ENCODE measurements at regions of chr3 and their contacts with region 1.

Region 1: DNA sequence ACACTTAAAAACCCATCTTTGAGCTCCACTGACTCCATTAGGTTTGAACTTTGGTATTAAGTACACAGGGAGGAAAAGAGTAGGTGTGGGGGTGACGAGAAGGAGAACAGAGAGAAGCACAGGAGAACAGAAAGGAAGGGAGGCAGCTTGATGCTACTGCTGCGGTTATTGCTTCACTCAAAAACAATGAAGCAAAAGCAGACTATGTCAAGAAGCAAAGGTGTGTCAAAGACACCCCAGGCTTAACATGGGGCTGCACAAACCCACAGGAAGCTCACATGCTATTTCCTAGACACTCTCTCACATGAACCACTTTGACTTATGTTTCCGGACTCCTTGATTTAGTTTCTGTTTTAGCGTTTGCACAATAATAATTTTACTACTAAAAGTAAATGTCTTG is 961.0 kb upstream of the CFAP20DC start:
- DNase-seq: peak; percentile 23 to 93 (median 64)
- ATAC-seq: peak; percentile 96
- H3K4me3 ChIP-seq: peak overlapping the region; percentile 31 to 32
- H3K4me3 Mint-ChIP-seq: peak overlapping the region; percentile 85
- H3K27ac ChIP-seq: peak overlapping the region; percentile 66 to 86
- H3K27ac Mint-ChIP-seq: peak overlapping the region; percentile 99
- H3K4me1 ChIP-seq: peaks cover 85% of the 10 kb centered on the region
- H3K4me1 Mint-ChIP-seq: peaks cover 89% of the 10 kb centered on the region
- H3K27me3 ChIP-seq: no peaks in the 10 kb centered on the region
- H3K27me3 Mint-ChIP-seq: no peaks in the 10 kb centered on the region
- CTCF ChIP-seq: no peak

Region 2: DNA sequence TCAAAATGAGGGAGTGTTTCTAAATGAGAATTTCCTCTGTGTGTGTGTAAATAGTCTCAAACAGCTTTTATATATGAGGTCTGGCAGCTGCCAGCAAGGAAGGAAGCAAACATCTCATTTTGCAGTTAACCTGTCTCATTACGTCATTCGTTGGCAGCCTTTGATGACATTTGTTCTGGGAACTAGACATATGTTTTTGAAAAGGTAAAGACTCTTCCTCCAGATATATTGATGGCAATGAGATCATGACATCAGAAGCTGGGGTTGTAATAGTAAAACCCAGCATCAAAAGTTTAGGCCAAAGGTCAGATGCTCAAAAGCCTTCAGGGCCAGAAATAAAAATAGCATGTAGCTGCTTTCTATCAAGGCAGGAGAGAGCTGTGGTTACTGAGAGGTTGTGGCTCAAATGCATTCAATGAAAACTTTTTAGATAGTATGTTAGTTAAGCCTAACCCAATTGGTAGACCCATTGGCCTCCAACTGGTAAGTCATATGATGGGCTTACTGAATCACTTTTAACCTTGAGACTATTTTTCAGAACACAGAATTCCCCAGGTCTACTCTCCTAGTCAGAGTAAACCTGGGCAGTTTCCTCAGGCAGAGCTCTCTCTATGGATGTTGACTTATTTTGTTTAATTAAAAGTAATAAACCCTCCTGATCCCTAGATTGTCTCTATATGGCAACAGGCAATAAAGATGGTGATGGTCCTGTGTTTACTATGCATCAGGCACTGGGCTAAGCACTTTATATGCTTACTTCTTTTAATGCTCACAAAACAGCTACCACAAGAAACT is 574.4 kb before region 1 on chr3:
- CTCF ChIA-PET with region 1: no interaction called
- POLR2A ChIA-PET with region 1: no interaction called
- intact Hi-C with region 1: loop called in 1 of 2 experiments (anchors 10 kb)
- DNase-seq: peak in 4 of 9 experiments; percentile 27 to 58 (median 48)
- ATAC-seq: peak; percentile 85
- H3K4me3 ChIP-seq: no peak overlapping the region
- H3K4me3 Mint-ChIP-seq: peak overlapping the region; percentile 20
- H3K27ac ChIP-seq: no peak overlapping the region
- H3K27ac Mint-ChIP-seq: peak overlapping the region; percentile 89
- H3K4me1 ChIP-seq: peaks cover 11% of the 10 kb centered on the region
- H3K4me1 Mint-ChIP-seq: peaks cover 14% of the 10 kb centered on the region
- H3K27me3 ChIP-seq: no peaks in the 10 kb centered on the region
- H3K27me3 Mint-ChIP-seq: no peaks in the 10 kb centered on the region
- CTCF ChIP-seq: no peak

Region 3: DNA sequence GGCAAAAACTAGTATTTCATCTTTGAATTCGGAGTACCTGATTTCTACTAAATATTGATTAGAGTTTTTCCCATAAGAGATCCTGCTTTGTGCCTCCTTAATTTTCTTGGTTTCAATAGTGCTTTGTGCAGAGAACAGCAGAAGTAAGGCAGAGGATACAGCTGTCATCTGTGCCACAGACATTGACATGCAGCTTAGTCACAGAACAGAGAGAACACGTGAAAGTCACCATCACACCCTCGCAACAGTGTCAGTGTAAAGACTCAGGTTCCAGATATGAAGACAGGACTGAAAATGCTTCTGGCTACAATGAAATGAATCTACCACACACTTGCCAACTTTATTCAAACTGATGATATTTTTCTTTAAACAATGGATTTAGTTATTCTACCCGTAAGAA is 18.2 kb before region 1 on chr3:
- CTCF ChIA-PET with region 1: interaction called, 6 read pairs
- POLR2A ChIA-PET with region 1: interaction called, 12 read pairs
- intact Hi-C with region 1: loop called in 1 of 2 experiments (anchors 2 kb)
- DNase-seq: no peak
- ATAC-seq: no peak
- H3K4me3 ChIP-seq: no peak overlapping the region
- H3K4me3 Mint-ChIP-seq: no peak overlapping the region
- H3K27ac ChIP-seq: no peak overlapping the region
- H3K27ac Mint-ChIP-seq: no peak overlapping the region
- H3K4me1 ChIP-seq: peaks cover 54% of the 10 kb centered on the region
- H3K4me1 Mint-ChIP-seq: peaks cover 72% of the 10 kb centered on the region
- H3K27me3 ChIP-seq: no peaks in the 10 kb centered on the region
- H3K27me3 Mint-ChIP-seq: no peaks in the 10 kb centered on the region
- CTCF ChIP-seq: no peak

Region 4: GRCh38 chr3:60025096-60026050 is 14.6 kb after region 1 on chr3:
- CTCF ChIA-PET with region 1: interaction called, 5 read pairs
- POLR2A ChIA-PET with region 1: interaction called, 8 read pairs
- intact Hi-C with region 1: loop called in 1 of 2 experiments (anchors 2 kb)
- DNase-seq: no peak
- ATAC-seq: no peak
- H3K4me3 ChIP-seq: no peak overlapping the region
- H3K4me3 Mint-ChIP-seq: no peak overlapping the region
- H3K27ac ChIP-seq: no peak overlapping the region
- H3K27ac Mint-ChIP-seq: no peak overlapping the region
- H3K4me1 ChIP-seq: peaks cover 16% of the 10 kb centered on the region
- H3K4me1 Mint-ChIP-seq: peaks cover 36% of the 10 kb centered on the region
- H3K27me3 ChIP-seq: no peaks in the 10 kb centered on the region
- H3K27me3 Mint-ChIP-seq: no peaks in the 10 kb centered on the region
- CTCF ChIP-seq: no peak

Region 5: DNA sequence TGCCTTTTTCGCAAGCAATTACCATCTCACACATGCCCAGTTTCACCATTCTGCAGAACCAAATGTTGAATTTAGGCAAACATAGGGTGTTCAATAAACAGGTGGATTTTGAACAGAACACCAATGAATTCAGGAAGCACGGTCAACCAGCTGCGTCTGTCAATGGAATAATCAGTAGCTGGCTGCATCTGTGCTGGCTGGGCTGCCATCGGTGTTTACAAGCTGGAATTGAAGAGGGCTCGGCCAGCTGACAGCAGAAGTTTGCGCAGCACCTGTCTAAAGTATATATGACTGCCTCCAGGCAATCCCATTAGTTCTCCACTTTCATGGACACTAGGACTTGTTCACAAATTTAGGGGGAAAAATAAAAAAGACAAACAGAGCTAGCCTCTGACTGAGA is 35.4 kb after region 1 on chr3:
- CTCF ChIA-PET with region 1: interaction called, 3 read pairs
- POLR2A ChIA-PET with region 1: interaction called, 5 read pairs
- intact Hi-C with region 1: loop called (anchors 5 kb)
- DNase-seq: no peak
- ATAC-seq: no peak
- H3K4me3 ChIP-seq: no peak overlapping the region
- H3K4me3 Mint-ChIP-seq: no peak overlapping the region
- H3K27ac ChIP-seq: no peak overlapping the region
- H3K27ac Mint-ChIP-seq: peak overlapping the region; percentile 20
- H3K4me1 ChIP-seq: peaks cover 12% of the 10 kb centered on the region
- H3K4me1 Mint-ChIP-seq: peaks cover 29% of the 10 kb centered on the region
- H3K27me3 ChIP-seq: no peaks in the 10 kb centered on the region
- H3K27me3 Mint-ChIP-seq: no peaks in the 10 kb centered on the region
- CTCF ChIP-seq: no peak

Region 6: DNA sequence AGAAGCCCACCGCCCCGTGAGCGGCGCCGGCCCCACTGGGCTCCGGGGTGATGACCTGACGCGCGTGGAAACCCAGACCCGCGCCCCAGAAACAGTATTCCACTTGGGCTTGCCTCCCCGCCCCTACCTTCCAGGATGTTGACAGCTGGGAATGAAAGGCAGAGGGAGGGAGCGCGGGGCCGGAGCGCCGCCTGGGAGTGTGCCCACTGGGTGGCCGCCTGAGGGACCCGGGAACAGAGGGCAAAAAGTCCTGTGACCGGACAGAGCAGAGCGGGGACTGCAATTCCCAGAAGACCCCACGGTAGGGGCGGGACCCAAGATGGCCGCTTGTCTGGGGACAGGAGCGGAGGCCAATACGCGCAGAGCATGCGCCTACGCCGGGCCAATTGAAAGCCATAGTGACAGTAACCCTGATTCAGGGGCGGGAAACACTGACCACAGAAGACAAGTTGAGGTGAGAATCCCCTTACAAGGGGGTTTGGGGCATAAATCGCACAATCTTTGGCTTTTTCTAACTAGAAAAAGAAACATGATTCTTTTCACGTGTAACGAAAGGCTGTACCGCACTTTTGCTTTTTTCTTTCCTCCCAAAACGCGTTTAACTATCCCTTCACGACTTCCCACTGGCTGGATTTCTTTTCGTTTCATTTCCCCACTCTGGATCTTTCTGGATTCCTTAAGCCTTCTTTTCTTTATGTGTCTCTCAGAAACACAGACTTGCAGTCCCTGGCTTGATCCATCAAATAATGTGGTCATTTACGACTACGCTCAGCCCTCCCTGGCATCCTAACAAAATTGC is 1240.6 kb after region 1 on chr3 and contains the start of gene FHIT:
- CTCF ChIA-PET with region 1: no interaction called
- POLR2A ChIA-PET with region 1: no interaction called
- intact Hi-C with region 1: loop called (anchors 10 kb)
- DNase-seq: peak; percentile 79 to 93 (median 89)
- ATAC-seq: peak; percentile 91
- H3K4me3 ChIP-seq: peak within 1 kb of the TSS; percentile 65 to 72
- H3K4me3 Mint-ChIP-seq: peak within 1 kb of the TSS; percentile 88
- H3K27ac ChIP-seq: peak within 1 kb of the TSS; percentile 15 to 65
- H3K27ac Mint-ChIP-seq: peak within 1 kb of the TSS; percentile 82
- H3K4me1 ChIP-seq: peaks cover 17% of the 10 kb centered on the region
- H3K4me1 Mint-ChIP-seq: peaks cover 20% of the 10 kb centered on the region
- H3K27me3 ChIP-seq: no peaks in the 10 kb centered on the region
- H3K27me3 Mint-ChIP-seq: peaks cover 3% of the 10 kb centered on the region
- CTCF ChIP-seq: no peak
- total RNA-seq, gene FHIT: 7.6 to 8.1 TPM